Left lung (tissue), 14 donors: ENCODE measurements at regions of chr1 and their contacts with region 1.

Region 1: GRCh38 chr1:22704440-22705067 is 6.1 kb upstream of the EPHB2 start:
- DNase-seq: peak in 3 of 4 donors; percentile 71 to 88 (median 86)
- ATAC-seq: peak; percentile 99
- H3K4me3 ChIP-seq: no peak overlapping the region
- H3K27ac ChIP-seq: no peak overlapping the region
- H3K4me1 ChIP-seq: peaks cover under 1 to 3% of the 10 kb centered on the region in 2 donors
- H3K27me3 ChIP-seq: peaks cover 5 to 18% of the 10 kb centered on the region in 2 donors
- CTCF ChIP-seq: peak; percentile 86

Region 2: DNA sequence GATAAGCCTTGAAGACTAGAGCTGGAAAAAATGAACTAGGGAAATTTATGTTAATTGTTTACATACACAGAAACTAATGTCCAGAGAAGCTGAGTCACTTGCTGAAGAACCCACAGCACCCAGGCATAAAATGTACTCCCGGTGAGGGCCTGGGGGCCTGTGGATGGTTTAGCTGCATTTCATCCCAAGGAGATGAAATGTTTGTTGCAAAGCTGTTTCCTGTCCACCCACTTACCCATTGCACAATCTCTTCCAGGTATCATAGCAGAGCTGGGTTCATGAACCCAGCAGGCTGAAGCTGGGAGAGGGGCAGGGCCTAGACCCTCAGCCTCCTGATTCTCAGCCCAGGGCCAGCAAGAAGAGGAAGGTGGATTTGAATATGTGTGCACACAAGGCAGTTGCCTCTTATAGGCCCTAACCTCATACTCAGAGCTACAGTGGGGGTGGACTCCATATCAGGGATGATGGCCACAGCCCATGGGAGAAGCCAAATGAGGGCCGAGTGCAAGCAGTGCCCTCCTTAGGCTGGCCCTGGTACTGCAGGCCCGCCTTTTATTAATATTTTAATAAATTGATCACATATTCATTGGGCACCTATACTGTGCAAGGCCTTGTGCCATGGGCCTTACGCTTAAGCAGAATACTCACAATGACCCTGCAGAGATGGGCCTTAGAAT is 157.3 kb after region 1 on chr1:
- intact Hi-C with region 1: loop called in 1 of 2 experiments (anchors 10 kb)
- DNase-seq: peak in 2 of 4 donors; percentile 14 to 61
- ATAC-seq: peak; percentile 92
- H3K4me3 ChIP-seq: no peak overlapping the region
- H3K27ac ChIP-seq: no peak overlapping the region
- H3K4me1 ChIP-seq: no peaks in the 10 kb centered on the region
- H3K27me3 ChIP-seq: peaks cover 0 to 4% of the 10 kb centered on the region in 2 donors
- CTCF ChIP-seq: peak; percentile 40 to 75

Region 3: DNA sequence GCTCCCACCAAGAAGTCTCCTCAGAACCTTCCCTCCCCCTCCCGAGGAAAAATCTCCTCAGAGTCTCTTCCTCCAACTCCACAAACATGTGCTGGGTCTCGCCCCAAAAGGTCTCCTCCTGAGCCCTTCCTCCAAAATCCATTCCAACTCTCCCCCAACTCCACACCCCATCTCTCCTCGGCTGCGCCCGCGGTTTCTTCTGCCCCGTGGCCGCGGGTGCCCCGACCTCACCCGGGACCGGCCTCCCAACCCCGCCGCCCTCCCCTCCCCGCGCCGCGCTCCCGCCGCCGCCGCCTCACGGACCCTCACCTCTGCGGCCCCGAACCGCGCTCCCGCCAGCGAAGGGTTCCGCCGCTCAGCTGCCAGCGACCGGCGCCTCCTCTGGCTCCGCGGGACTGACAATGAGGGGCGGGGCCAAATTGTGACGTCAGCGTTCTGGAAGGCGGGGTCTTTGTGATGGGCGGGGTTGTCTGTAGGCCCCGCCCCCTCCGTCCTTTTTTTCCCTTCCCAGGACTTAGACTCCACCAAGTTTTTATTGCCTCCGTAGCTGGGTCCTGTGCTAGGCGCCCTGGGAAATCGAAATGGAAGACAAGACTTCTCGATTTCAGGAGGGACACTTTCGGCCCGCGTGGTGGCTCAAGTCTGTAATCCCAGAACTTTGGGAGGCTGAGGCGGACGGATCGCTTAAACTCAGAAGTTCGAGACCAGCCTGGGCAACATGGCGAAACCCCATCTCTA is 464.1 kb after region 1 on chr1 and contains the start of gene LUZP1:
- intact Hi-C with region 1: no loop called
- DNase-seq: peak; percentile 80 to 96 (median 90)
- ATAC-seq: peak; percentile 95
- H3K4me3 ChIP-seq: peak within 1 kb of the TSS; percentile 84 to 91
- H3K27ac ChIP-seq: peak within 1 kb of the TSS; percentile 89 to 93
- H3K4me1 ChIP-seq: peaks cover 6 to 51% of the 10 kb centered on the region in 2 donors
- H3K27me3 ChIP-seq: no peaks in the 10 kb centered on the region
- CTCF ChIP-seq: no peak
- polyA plus RNA-seq, gene LUZP1: 22.9 to 32.5 (median 28.8) TPM